CD8-positive, alpha-beta memory T cell (primary cell): ENCODE measurements at regions of chr20 and their contacts with region 1.

Region 1: DNA sequence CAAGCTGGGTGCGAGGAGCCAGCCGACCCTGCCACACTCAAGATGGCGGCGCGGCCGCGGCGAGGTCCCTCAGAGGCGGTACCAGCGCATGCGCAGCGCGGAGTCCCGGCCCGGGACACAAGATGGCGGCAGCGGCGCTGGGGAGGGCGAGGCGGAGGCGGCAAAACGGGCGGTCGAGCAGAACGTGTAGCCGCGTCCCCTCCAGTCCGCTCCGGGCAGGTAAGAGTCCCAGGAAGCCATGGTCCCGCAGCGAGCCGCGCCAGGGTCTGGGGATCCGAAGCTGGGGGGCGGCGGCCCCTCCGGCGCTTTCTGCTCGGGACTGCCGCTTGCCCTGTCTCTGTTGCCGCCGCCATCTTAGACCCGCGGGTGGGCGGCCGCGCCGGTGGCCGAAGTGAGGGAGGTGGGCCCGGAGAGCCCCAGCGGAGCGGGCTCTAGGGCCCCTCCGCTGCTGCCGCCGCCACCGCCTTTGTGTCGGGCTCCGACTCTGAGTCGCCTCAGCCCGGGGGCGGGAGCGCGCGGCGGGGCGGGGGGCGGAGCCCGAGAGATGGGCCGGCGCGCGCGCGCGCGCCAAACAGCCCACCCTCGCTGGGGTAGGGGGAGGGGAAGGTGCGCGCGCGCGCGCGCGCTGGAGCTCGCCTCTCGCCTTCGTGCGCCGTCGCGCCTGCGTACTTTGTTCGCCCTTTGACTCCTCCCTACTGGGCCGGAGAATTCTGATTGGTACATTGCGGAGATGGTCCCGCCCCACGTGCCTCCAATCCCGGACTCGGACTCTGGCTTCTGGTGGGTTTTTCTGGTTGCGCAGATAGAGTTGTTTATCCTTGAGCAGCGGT is at the start of gene PCIF1:
- DNase-seq: peak; percentile 96 to 100 (median 99)
- H3K4me3 ChIP-seq: peak within 1 kb of the TSS; percentile 97
- H3K4me3 Mint-ChIP-seq: peak within 1 kb of the TSS; percentile 90 to 98 (median 97)
- H3K27ac ChIP-seq: peak within 1 kb of the TSS; percentile 95
- H3K27ac Mint-ChIP-seq: peak within 1 kb of the TSS; percentile 95 to 99 (median 98)
- H3K4me1 ChIP-seq: peaks cover 12% of the 10 kb centered on the region
- H3K4me1 Mint-ChIP-seq: peaks cover 26 to 42% (median 27%) of the 10 kb centered on the region in 3 donors
- H3K27me3 ChIP-seq: no peaks in the 10 kb centered on the region
- H3K27me3 Mint-ChIP-seq: no peaks in the 10 kb centered on the region
- total RNA-seq, gene PCIF1: 33.6 to 34.1 TPM

Region 2: DNA sequence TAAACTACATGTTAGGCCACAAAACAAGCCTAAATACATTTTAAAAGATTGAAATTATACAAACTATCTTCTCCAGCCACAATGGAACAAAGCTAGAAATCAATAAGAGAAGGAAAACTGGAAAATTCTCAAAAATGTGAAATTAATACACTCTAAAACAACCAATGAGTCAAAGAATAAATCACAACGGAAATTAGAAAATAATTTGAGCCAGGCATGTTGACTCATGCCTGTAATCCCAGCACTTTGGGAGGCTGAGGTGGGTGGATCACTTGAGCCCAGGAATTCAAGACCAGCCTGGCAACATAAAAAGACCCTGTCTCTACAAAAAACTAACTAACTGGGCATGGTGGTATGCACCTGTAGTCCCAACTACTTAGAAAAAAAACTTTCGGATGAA is 239.3 kb before region 1 on chr20:
- CTCF ChIA-PET with region 1: no interaction called
- POLR2A ChIA-PET with region 1: no interaction called
- DNase-seq: no peak
- H3K4me3 ChIP-seq: no peak overlapping the region
- H3K4me3 Mint-ChIP-seq: no peak overlapping the region
- H3K27ac ChIP-seq: no peak overlapping the region
- H3K27ac Mint-ChIP-seq: no peak overlapping the region
- H3K4me1 ChIP-seq: no peaks in the 10 kb centered on the region
- H3K4me1 Mint-ChIP-seq: no peaks in the 10 kb centered on the region
- H3K27me3 ChIP-seq: no peaks in the 10 kb centered on the region
- H3K27me3 Mint-ChIP-seq: peaks cover 12 to 49% of the 10 kb centered on the region in 2 donors

Region 3: GRCh38 chr20:45857114-45857881 is 77.5 kb before region 1 on chr20 and contains the starts of genes ACOT8 and ZSWIM3:
- CTCF ChIA-PET with region 1: interaction called, 3 read pairs
- POLR2A ChIA-PET with region 1: interaction called, 29 read pairs
- DNase-seq: peak; percentile 84 to 98 (median 97)
- H3K4me3 ChIP-seq: peak within 1 kb of the TSS; percentile 91
- H3K4me3 Mint-ChIP-seq: peak within 1 kb of the TSS; percentile 89 to 99 (median 96)
- H3K27ac ChIP-seq: peak within 1 kb of the TSS; percentile 93
- H3K27ac Mint-ChIP-seq: peak within 1 kb of the TSS; percentile 87 to 98 (median 98)
- H3K4me1 ChIP-seq: peaks cover 30% of the 10 kb centered on the region
- H3K4me1 Mint-ChIP-seq: peaks cover 41 to 79% (median 71%) of the 10 kb centered on the region in 3 donors
- H3K27me3 ChIP-seq: no peaks in the 10 kb centered on the region
- H3K27me3 Mint-ChIP-seq: peaks cover 0 to 2% of the 10 kb centered on the region in 2 donors
- total RNA-seq, gene ACOT8: 27.1 to 27.3 TPM
- total RNA-seq, gene ZSWIM3: 5.9 to 6.5 TPM

Region 4: DNA sequence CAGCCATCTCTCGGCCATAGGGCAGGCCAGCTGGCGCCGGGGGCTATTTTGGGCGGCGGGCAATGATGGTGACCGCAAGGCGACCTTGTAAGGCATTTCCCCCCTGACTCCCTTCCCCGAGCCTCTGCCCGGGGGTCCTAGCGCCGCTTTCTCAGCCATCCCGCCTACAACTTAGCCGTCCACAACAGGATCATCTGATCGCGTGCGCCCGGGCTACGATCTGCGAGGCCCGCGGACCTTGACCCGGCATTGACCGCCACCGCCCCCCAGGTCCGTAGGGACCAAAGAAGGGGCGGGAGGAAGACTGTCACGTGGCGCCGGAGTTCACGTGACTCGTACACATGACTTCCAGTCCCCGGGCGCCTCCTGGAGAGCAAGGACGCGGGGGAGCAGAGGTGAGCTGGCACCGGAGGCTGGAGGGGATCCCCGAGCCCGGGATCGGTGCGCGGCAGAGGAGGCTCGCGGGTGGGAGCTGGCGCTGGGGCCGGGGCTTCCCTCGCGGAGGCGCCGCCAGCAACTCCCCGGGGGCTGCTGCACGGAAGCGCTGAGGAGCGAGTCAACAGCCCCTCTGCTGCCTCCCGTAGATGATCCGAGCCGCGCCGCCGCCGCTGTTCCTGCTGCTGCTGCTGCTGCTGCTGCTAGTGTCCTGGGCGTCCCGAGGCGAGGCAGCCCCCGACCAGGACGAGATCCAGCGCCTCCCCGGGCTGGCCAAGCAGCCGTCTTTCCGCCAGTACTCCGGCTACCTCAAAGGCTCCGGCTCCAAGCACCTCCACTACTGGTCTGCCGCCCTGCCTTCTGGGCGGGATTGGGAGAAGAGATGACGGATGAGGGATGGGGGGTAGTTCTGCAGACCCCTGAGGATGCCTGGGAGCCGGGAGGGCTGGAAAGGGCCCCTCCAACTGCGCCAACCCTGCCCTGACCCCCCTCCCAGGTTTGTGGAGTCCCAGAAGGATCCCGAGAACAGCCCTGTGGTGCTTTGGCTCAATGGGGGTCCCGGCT is 43.5 kb before region 1 on chr20 and contains the starts of genes CTSA and NEURL2:
- CTCF ChIA-PET with region 1: interaction called, 39 read pairs
- POLR2A ChIA-PET with region 1: interaction called, 28 read pairs
- DNase-seq: peak; percentile 77 to 90 (median 81)
- H3K4me3 ChIP-seq: peak within 1 kb of the TSS; percentile 85
- H3K4me3 Mint-ChIP-seq: peak within 1 kb of the TSS; percentile 87 to 95 (median 92)
- H3K27ac ChIP-seq: peak within 1 kb of the TSS; percentile 53
- H3K27ac Mint-ChIP-seq: peak within 1 kb of the TSS; percentile 83 to 97 (median 91)
- H3K4me1 ChIP-seq: peaks cover 23% of the 10 kb centered on the region
- H3K4me1 Mint-ChIP-seq: peaks cover 29 to 47% (median 39%) of the 10 kb centered on the region in 3 donors
- H3K27me3 ChIP-seq: no peaks in the 10 kb centered on the region
- H3K27me3 Mint-ChIP-seq: no peaks in the 10 kb centered on the region
- total RNA-seq, gene CTSA: 81.1 to 82.1 TPM
- total RNA-seq, gene NEURL2: 2.7 to 2.8 TPM

Region 5: GRCh38 chr20:45924391-45925261 is 10.2 kb before region 1 on chr20:
- CTCF ChIA-PET with region 1: interaction called, 5 read pairs
- POLR2A ChIA-PET with region 1: interaction called, 11 read pairs
- DNase-seq: no peak
- H3K4me3 ChIP-seq: no peak overlapping the region
- H3K4me3 Mint-ChIP-seq: no peak overlapping the region
- H3K27ac ChIP-seq: no peak overlapping the region
- H3K27ac Mint-ChIP-seq: no peak overlapping the region
- H3K4me1 ChIP-seq: no peaks in the 10 kb centered on the region
- H3K4me1 Mint-ChIP-seq: peaks cover 0 to 8% (median 0%) of the 10 kb centered on the region in 3 donors
- H3K27me3 ChIP-seq: no peaks in the 10 kb centered on the region
- H3K27me3 Mint-ChIP-seq: peaks cover 10 to 17% of the 10 kb centered on the region in 2 donors

Region 6: GRCh38 chr20:45971675-45972499 is 37.1 kb after region 1 on chr20 and contains the start of gene ZNF335:
- CTCF ChIA-PET with region 1: interaction called, 46 read pairs
- POLR2A ChIA-PET with region 1: interaction called, 113 read pairs
- DNase-seq: peak; percentile 89 to 97 (median 95)
- H3K4me3 ChIP-seq: peak within 1 kb of the TSS; percentile 92
- H3K4me3 Mint-ChIP-seq: peak within 1 kb of the TSS; percentile 77 to 99 (median 95)
- H3K27ac ChIP-seq: peak within 1 kb of the TSS; percentile 100
- H3K27ac Mint-ChIP-seq: peak within 1 kb of the TSS; percentile 99 to 100 (median 100)
- H3K4me1 ChIP-seq: peaks cover 31% of the 10 kb centered on the region
- H3K4me1 Mint-ChIP-seq: peaks cover 22 to 30% (median 24%) of the 10 kb centered on the region in 3 donors
- H3K27me3 ChIP-seq: no peaks in the 10 kb centered on the region
- H3K27me3 Mint-ChIP-seq: peaks cover 0 to 7% of the 10 kb centered on the region in 2 donors
- total RNA-seq, gene ZNF335: 37.5 to 38.3 TPM

Region 7: GRCh38 chr20:45983279-45983743 is 48.5 kb after region 1 on chr20:
- CTCF ChIA-PET with region 1: no interaction called
- POLR2A ChIA-PET with region 1: no interaction called
- DNase-seq: no peak
- H3K4me3 ChIP-seq: no peak overlapping the region
- H3K4me3 Mint-ChIP-seq: no peak overlapping the region
- H3K27ac ChIP-seq: no peak overlapping the region
- H3K27ac Mint-ChIP-seq: peak overlapping the region in 2 of 8 donors; percentile 40 to 89
- H3K4me1 ChIP-seq: no peaks in the 10 kb centered on the region
- H3K4me1 Mint-ChIP-seq: no peaks in the 10 kb centered on the region
- H3K27me3 ChIP-seq: no peaks in the 10 kb centered on the region
- H3K27me3 Mint-ChIP-seq: peaks cover 3 to 4% of the 10 kb centered on the region in 2 donors

Region 8: GRCh38 chr20:45993197-45993951 is 58.6 kb after region 1 on chr20:
- CTCF ChIA-PET with region 1: no interaction called
- POLR2A ChIA-PET with region 1: no interaction called
- DNase-seq: no peak
- H3K4me3 ChIP-seq: no peak overlapping the region
- H3K4me3 Mint-ChIP-seq: no peak overlapping the region
- H3K27ac ChIP-seq: no peak overlapping the region
- H3K27ac Mint-ChIP-seq: no peak overlapping the region
- H3K4me1 ChIP-seq: peaks cover 18% of the 10 kb centered on the region
- H3K4me1 Mint-ChIP-seq: peaks cover 10 to 17% (median 14%) of the 10 kb centered on the region in 3 donors
- H3K27me3 ChIP-seq: no peaks in the 10 kb centered on the region
- H3K27me3 Mint-ChIP-seq: peaks cover 22 to 34% of the 10 kb centered on the region in 2 donors

Region 9: GRCh38 chr20:46040902-46041535 is 106.2 kb after region 1 on chr20:
- CTCF ChIA-PET with region 1: no interaction called
- POLR2A ChIA-PET with region 1: no interaction called
- DNase-seq: peak in 3 of 5 donors; percentile 21 to 57 (median 21)
- H3K4me3 ChIP-seq: no peak overlapping the region
- H3K4me3 Mint-ChIP-seq: no peak overlapping the region
- H3K27ac ChIP-seq: no peak overlapping the region
- H3K27ac Mint-ChIP-seq: no peak overlapping the region
- H3K4me1 ChIP-seq: no peaks in the 10 kb centered on the region
- H3K4me1 Mint-ChIP-seq: no peaks in the 10 kb centered on the region
- H3K27me3 ChIP-seq: peaks cover 2% of the 10 kb centered on the region
- H3K27me3 Mint-ChIP-seq: peaks cover 18 to 53% of the 10 kb centered on the region in 2 donors